ENCODE measurements at regions of chr2 and their contacts with region 1.

Region 1: DNA sequence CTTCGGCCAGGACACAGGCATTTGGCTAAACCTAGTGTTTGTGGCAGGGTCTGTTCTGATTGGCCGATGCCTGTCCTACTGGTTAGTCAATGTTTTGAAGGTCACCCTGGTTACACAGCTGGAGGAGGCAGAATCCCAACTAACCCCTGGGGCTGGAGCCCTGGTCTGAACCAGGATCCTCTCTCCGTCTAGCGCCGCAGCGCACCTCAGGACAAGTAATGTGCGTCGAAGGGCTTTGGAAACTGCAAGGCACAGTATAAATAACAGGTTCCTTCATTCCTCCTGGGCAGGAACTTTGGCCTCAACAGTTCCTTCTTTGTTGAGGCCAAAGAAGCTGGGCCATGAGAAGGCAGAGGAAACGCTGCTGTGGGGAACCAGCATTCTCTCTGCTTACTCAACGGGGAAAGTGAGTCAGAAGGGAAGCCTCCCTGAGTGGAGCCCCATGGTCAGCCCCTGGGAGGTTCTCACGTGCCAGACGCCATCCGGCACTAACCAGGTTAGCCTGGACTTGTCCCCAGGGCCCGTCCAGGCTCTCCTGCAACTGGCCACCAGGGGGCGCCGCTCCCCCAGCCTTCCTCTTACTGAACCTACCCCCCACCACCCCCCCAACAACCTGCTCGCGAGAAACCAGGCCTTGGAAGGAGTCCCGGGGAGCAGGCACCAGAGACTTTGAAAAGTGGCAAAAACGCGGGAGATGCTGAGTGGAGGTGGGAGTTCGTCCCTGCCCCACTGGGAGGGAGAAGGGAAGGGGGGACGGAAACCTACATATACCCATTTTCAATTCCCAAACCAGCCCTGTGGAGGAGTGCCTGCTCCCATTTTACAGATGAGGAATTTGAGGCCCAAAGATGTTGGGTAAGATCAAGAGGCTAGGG is 19.8 kb downstream of the TEX44 start:
- DNase-seq: peak; percentile 74
- H3K4me3 ChIP-seq: no peak overlapping the region
- H3K27me3 ChIP-seq: no peaks in the 10 kb centered on the region
- CTCF ChIP-seq: peak; percentile 97

Region 2: GRCh38 chr2:230762317-230762896 is 850.0 kb before region 1 on chr2:
- CTCF ChIA-PET with region 1: no interaction called
- POLR2A ChIA-PET with region 1: no interaction called
- DNase-seq: no peak
- H3K4me3 ChIP-seq: no peak overlapping the region
- H3K27me3 ChIP-seq: no peaks in the 10 kb centered on the region
- CTCF ChIP-seq: peak; percentile 54

Region 3: GRCh38 chr2:231627384-231628120 is 15.1 kb after region 1 on chr2:
- CTCF ChIA-PET with region 1: interaction called, 15 read pairs
- POLR2A ChIA-PET with region 1: no interaction called
- DNase-seq: no peak
- H3K4me3 ChIP-seq: no peak overlapping the region
- H3K27me3 ChIP-seq: no peaks in the 10 kb centered on the region
- CTCF ChIP-seq: no peak

Region 4: DNA sequence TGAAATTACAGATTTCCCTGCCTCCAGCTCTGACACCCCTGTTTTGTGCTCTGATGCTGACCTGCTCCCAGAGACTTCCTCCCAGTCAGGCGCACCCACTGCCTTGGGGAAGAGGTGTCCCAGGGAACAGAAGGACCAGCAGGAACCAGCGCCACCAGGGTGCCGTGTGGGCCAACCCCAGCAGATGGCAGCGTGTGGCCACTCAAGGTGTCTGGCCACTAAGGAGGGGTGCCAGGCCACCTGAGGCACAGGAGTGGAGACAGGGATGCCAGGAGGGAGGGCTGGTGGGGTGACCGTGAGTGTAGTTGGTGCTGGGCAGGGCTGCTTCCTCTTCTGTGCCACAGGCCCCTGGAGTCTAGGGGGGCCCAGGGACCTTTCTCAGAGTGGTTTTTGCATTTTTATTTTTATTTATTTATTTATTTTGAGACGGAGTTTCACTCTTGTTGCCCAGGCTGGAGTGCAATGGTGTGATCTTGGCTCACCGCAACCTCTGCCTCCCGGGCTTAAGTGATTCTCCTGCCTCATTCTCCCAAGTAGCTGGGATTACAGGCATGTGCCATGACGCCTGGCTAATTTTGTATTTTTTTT is 36.3 kb after region 1 on chr2:
- CTCF ChIA-PET with region 1: interaction called, 15 read pairs
- POLR2A ChIA-PET with region 1: no interaction called
- DNase-seq: no peak
- H3K4me3 ChIP-seq: no peak overlapping the region
- H3K27me3 ChIP-seq: no peaks in the 10 kb centered on the region
- CTCF ChIP-seq: peak; percentile 72

Region 5: DNA sequence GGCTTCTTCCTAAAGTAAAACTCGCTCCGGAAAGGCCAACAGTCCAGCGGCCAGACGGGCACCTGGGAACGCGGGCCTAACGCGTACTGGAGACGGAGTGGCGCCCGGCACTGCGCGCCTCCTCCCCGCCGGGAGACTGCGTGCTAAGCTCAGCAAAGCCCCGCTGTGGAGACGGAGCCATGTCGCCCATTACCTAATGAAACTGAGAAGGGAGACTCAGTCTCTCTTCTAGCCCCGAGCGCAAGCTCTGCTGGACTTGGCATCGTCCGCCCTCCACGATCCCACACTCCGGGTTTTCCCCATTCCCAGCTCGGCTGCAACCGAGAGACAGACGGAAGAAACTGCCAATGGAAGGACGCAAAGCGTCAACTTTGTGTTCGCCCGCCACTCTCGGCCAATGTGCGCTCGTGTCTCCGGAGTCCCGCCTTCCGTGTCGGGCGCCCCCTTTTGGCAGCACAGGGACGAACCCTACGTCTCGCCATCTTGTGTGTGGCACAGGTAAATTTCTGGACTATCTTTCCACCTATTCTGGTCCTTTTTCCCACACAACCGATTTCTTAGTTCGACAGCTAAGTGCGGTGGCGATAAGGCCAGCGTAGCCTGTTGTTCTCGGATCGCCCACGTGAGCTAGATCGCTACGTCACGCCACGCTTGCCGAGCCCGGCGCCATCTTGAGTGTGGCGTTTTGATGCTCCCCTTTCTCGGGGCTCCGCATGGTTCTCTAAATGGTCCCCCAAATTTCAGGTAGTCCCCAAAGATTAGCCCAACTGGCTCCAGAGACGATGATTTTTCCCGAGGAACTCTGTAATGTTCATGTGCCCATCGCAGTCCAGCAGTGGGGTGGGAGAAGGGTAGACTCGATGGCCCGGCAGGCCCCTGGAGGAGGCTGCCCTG is 94.6 kb after region 1 on chr2:
- CTCF ChIA-PET with region 1: interaction called, 139 read pairs
- POLR2A ChIA-PET with region 1: no interaction called
- DNase-seq: peak; percentile 81
- H3K4me3 ChIP-seq: peak overlapping the region; percentile 58
- H3K27me3 ChIP-seq: no peaks in the 10 kb centered on the region
- CTCF ChIP-seq: peak; percentile 95

Measured in BJ (cell line).